A673 (cell line): ENCODE measurements at regions of chr15 and their contacts with region 1.

Region 1: DNA sequence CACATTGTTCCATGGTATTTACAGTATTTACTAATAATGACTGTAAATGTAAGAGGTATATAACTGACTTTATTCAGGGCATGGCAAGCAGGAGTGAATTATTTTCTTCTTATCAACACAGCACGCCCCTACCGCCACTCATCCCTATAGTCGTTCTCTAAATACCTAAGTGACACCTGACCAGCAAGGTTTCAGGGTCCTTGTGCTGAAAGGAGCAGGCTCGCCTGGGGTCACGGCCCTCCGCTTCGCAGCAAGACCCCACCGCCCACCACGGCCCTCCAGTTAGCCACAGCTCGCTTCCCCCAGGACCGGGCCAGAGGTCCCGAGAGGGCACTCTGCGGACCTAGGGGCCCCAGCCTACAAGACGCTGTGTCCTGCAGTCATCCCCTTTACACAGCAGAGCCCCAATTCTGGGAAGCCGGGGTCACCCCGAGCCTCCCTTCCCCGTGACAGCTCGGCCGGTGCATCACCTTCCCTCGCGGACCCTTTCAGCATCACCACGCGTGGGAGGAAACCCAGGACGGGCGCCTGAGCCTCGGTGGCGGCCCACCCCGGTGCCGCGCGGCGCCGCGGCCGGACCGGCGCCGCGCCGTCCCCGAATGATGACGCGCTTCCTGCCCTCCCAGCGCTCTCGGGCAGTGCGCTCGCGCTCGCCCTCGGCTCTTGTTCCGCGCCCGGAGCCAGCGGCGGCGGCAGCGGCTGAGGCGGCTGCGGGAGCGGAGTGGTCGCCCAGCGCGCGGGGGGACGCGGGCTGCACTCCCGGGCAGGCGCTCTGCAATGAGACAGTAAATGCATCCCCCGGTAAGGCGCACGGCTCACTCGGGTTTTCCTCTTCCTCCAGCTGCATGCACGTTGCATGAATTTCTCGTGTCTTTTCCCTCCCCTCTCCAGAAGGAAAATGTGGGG is 225.1 kb upstream of the C2CD4B start:
- DNase-seq: peak; percentile 85
- H3K4me3 ChIP-seq: peak within 1 kb of the TSS; percentile 90
- H3K27ac ChIP-seq: peak within 1 kb of the TSS; percentile 85
- H3K4me1 ChIP-seq: peaks cover 4% of the 10 kb centered on the region
- H3K27me3 ChIP-seq: peaks cover 37% of the 10 kb centered on the region
- CTCF ChIP-seq: no peak

Region 2: DNA sequence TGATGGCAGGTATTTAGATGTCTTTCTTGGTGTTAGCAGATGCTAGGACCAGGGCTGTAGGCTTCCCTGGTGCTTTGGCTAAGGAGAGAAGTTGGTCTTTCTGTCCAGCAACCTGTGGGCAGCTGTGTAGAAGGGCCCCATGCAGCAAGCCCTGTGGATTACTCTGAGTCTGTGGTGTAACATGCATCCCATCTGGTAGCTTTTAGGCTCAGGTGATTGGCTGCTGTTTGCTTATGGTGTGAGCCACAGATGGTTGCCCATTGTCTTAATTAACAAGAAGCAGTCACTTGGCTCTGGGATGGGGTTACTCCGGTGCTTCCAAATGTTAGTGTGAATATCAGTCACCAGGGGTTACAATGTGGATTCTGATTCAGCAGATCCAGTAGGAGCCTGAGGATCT is 143.5 kb after region 1 on chr15:
- CTCF ChIA-PET with region 1: no interaction called
- POLR2A ChIA-PET with region 1: no interaction called
- intact Hi-C with region 1: loop called (anchors 10 kb)
- DNase-seq: no peak
- H3K4me3 ChIP-seq: no peak overlapping the region
- H3K27ac ChIP-seq: no peak overlapping the region
- H3K4me1 ChIP-seq: no peaks in the 10 kb centered on the region
- H3K27me3 ChIP-seq: no peaks in the 10 kb centered on the region
- CTCF ChIP-seq: no peak

Region 3: DNA sequence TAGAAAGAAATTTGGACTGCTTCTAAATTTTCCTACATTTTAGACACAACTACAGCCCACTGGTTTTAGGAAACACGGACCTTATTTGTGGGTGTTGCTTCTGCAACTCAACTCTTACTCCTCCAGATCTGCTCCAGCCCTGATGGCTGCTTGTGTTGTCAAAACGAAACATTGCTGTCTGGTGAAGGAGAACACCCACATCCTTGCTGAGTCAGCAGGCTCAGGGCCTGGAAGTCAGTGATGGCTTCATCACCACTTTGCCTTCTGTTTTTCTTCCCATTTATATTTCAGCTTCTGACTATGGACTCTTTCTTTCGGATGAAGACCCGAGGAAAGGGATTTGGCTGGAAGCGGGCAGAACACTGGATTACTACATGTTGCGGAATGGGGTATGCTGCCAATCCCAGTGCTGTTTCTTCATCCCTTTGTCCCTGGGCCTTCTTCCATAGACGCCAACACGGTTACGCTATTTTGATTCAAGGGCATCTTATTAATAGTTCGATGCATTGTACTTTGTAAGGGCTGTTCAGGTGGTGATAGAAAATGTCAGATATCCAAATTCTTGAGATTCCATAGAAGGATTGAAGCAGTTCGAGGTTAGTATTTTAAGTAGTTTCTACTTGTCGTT is 259.8 kb after region 1 on chr15:
- CTCF ChIA-PET with region 1: no interaction called
- POLR2A ChIA-PET with region 1: no interaction called
- intact Hi-C with region 1: loop called (anchors 2 kb)
- DNase-seq: no peak
- H3K4me3 ChIP-seq: no peak overlapping the region
- H3K27ac ChIP-seq: no peak overlapping the region
- H3K4me1 ChIP-seq: no peaks in the 10 kb centered on the region
- H3K27me3 ChIP-seq: no peaks in the 10 kb centered on the region
- CTCF ChIP-seq: no peak